ENCODE measurements at regions of chr5 and their contacts with region 1.

Region 1: DNA sequence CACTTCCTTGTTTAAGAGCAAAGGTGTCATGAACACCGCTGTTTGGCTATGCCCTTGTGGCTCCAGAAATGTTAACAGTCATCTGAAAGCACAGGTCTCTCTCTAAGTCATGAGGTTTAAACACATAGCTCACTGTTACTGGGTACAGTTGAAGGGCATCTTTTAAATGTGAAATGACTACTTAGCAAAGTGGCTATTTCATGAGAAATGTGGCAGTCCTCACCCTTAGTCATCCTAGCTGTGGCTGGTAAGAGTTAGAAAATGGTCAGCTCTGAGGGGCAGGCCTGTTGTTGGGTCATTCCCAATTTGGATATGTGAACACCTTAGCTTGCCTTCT is 24.2 kb upstream of the TMEM171 start:
- DNase-seq: no peak
- H3K4me3 ChIP-seq: no peak overlapping the region
- H3K27ac ChIP-seq: no peak overlapping the region
- H3K4me1 ChIP-seq: peaks cover 21% of the 10 kb centered on the region
- H3K27me3 ChIP-seq: no peaks in the 10 kb centered on the region
- CTCF ChIP-seq: no peak

Region 2: DNA sequence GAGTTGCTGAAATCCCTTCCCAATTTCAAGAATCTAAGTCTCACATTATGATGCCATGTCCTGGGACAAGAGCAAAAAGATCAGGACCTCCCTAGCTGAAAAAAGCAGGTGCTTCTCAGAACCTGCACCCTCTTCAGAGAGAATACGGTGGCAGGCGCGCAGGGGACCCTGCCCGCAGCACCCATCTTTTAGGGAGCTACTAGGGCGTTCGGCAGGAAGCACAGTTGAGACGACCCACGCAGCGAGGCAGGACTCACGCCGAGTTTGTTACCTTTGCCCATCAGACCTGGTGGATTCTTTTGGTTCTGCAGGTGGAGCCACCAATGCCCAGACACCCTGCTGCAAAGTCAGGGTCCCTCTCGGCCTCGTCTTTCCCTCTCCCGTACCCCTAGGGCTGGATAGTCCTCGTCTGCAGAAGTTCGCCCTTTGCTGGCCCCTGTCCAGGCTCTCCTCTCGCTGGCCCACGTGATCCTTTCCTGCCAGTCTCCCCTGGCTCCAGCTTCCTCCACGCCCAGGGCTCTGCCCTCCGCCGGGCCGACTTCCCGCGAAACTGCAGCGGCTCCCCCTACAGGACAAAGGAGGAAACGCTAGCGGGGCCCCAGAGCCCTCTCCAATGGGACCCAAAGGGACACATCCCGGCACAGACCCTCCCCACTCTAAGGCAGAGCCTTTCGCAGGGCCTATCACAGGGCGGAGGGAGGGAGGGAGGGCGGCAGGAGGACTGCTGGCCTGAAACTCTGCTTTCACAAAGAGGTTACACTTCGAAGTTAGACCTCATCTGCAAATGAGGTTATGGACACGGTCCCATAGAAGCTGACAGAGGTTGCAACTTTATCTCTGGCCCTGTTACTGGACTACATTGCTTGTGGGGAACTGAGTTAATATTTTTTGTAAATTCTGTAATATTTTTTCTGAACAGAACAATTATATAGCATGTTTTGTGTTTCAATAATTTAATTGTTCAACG is 105.6 kb after region 1 on chr5:
- CTCF ChIA-PET with region 1: interaction called, 12 read pairs
- POLR2A ChIA-PET with region 1: no interaction called
- intact Hi-C with region 1: no loop called
- DNase-seq: peak; percentile 53 to 70
- H3K4me3 ChIP-seq: no peak overlapping the region
- H3K27ac ChIP-seq: no peak overlapping the region
- H3K4me1 ChIP-seq: no peaks in the 10 kb centered on the region
- H3K27me3 ChIP-seq: no peaks in the 10 kb centered on the region
- CTCF ChIP-seq: peak; percentile 89

Region 3: GRCh38 chr5:73617510-73618279 is 521.5 kb after region 1 on chr5:
- CTCF ChIA-PET with region 1: no interaction called
- POLR2A ChIA-PET with region 1: no interaction called
- intact Hi-C with region 1: no loop called
- DNase-seq: peak in 1 of 2 experiments; percentile 43
- H3K4me3 ChIP-seq: no peak overlapping the region
- H3K27ac ChIP-seq: no peak overlapping the region
- H3K4me1 ChIP-seq: peaks cover 29% of the 10 kb centered on the region
- H3K27me3 ChIP-seq: no peaks in the 10 kb centered on the region
- CTCF ChIP-seq: no peak